ENCODE measurements at regions of chr1 and their contacts with region 1.

Region 1: DNA sequence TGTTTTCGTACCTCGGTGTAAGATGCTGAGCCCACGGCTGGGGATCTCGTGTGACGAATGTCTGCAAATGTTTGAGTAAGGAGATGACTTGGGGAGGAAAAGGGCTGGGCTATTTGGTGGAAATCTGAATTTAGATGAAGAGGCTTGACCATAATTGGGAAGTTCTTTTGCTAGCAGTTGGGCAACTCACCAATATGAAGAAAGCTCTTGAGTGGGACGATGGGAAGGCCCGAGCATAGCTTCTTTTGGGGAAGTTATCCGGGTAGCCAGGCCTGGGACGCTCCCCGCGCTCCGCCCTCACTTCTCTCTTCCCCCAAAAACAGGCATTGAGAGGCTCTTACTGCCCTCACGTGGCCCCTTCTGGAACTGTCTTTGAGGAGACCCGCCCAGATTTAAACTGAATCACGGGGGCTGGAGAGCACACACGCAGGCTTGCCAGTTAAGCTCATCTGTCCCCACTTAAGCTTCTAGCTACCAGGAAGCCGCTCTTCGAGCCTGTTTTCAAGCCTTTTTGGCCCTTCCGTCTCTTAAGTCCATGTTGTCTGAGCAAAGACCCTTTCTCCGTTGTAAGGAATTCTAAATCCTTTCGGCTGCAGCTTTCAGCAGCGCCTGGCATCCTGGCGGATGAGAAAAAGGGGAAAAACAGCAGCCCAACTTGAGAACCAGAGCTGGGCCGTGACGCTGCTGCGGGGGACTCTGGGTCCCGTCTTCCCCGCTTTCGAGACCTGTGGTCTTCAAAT is 93.1 kb downstream of the NID1 start:
- DNase-seq: peak; percentile 71 to 87 (median 84)
- ATAC-seq: peak; percentile 98
- H3K4me3 ChIP-seq: peak overlapping the region; percentile 14
- H3K4me3 Mint-ChIP-seq: peak overlapping the region; percentile 67 to 82 (median 76)
- H3K27ac ChIP-seq: peak overlapping the region; percentile 59
- H3K27ac Mint-ChIP-seq: peak overlapping the region; percentile 87 to 95 (median 90)
- H3K4me1 ChIP-seq: peaks cover 9 to 14% of the 10 kb centered on the region in 2 donors
- H3K4me1 Mint-ChIP-seq: peaks cover 9 to 19% (median 13%) of the 10 kb centered on the region in 7 donors
- H3K27me3 ChIP-seq: no peaks in the 10 kb centered on the region
- H3K27me3 Mint-ChIP-seq: peaks cover 0 to 26% (median 0%) of the 10 kb centered on the region in 5 donors

Region 2: GRCh38 chr1:235513495-235514366 is 458.0 kb before region 1 on chr1:
- CTCF ChIA-PET with region 1: interaction called, 6 read pairs
- POLR2A ChIA-PET with region 1: no interaction called
- intact Hi-C with region 1: loop called (anchors 1 kb)
- DNase-seq: peak in 7 of 9 donors; percentile 32 to 68 (median 53)
- ATAC-seq: peak; percentile 75
- H3K4me3 ChIP-seq: no peak overlapping the region
- H3K4me3 Mint-ChIP-seq: no peak overlapping the region
- H3K27ac ChIP-seq: no peak overlapping the region
- H3K27ac Mint-ChIP-seq: peak overlapping the region in 1 of 9 donors; percentile 41
- H3K4me1 ChIP-seq: no peaks in the 10 kb centered on the region
- H3K4me1 Mint-ChIP-seq: peaks cover 0 to 10% (median 0%) of the 10 kb centered on the region in 7 donors
- H3K27me3 ChIP-seq: no peaks in the 10 kb centered on the region
- H3K27me3 Mint-ChIP-seq: peaks cover 0 to 27% (median 3%) of the 10 kb centered on the region in 5 donors

Region 3: GRCh38 chr1:235758931-235759330 is 212.8 kb before region 1 on chr1:
- CTCF ChIA-PET with region 1: interaction called, 6 read pairs
- POLR2A ChIA-PET with region 1: no interaction called
- intact Hi-C with region 1: loop called in 1 of 2 experiments (anchors 10 kb)
- DNase-seq: no peak
- ATAC-seq: no peak
- H3K4me3 ChIP-seq: no peak overlapping the region
- H3K4me3 Mint-ChIP-seq: no peak overlapping the region
- H3K27ac ChIP-seq: no peak overlapping the region
- H3K27ac Mint-ChIP-seq: no peak overlapping the region
- H3K4me1 ChIP-seq: no peaks in the 10 kb centered on the region
- H3K4me1 Mint-ChIP-seq: no peaks in the 10 kb centered on the region
- H3K27me3 ChIP-seq: no peaks in the 10 kb centered on the region
- H3K27me3 Mint-ChIP-seq: no peaks in the 10 kb centered on the region

Region 4: DNA sequence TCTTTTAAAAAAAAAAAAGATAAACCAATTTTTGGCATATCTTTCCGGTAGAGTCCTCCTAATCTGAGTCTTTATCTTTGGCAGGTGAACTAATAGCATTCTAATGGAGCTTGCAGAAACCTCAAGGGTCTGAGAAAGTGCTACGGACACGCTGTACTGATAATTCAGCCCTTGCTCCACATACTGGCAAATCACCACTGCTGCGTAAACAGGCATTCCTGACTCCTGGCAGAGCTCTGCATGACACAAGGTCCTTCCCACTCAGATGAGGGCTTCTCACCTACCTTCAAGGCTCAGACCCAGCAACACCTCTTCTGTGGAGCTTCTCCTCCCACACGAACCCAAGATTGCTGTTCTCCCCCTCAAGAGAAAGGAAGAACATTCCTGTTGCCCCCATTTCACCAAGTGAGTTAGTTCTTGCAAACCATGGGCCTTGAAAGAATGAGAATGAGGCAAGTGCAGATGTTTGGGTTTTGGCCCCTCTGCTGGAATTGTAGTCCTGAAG is 153.1 kb before region 1 on chr1:
- CTCF ChIA-PET with region 1: interaction called, 6 read pairs
- POLR2A ChIA-PET with region 1: no interaction called
- intact Hi-C with region 1: loop called in 1 of 2 experiments (anchors 5 kb)
- DNase-seq: no peak
- ATAC-seq: no peak
- H3K4me3 ChIP-seq: no peak overlapping the region
- H3K4me3 Mint-ChIP-seq: no peak overlapping the region
- H3K27ac ChIP-seq: no peak overlapping the region
- H3K27ac Mint-ChIP-seq: no peak overlapping the region
- H3K4me1 ChIP-seq: no peaks in the 10 kb centered on the region
- H3K4me1 Mint-ChIP-seq: peaks cover 0 to 4% (median 0%) of the 10 kb centered on the region in 7 donors
- H3K27me3 ChIP-seq: no peaks in the 10 kb centered on the region
- H3K27me3 Mint-ChIP-seq: no peaks in the 10 kb centered on the region

Region 5: DNA sequence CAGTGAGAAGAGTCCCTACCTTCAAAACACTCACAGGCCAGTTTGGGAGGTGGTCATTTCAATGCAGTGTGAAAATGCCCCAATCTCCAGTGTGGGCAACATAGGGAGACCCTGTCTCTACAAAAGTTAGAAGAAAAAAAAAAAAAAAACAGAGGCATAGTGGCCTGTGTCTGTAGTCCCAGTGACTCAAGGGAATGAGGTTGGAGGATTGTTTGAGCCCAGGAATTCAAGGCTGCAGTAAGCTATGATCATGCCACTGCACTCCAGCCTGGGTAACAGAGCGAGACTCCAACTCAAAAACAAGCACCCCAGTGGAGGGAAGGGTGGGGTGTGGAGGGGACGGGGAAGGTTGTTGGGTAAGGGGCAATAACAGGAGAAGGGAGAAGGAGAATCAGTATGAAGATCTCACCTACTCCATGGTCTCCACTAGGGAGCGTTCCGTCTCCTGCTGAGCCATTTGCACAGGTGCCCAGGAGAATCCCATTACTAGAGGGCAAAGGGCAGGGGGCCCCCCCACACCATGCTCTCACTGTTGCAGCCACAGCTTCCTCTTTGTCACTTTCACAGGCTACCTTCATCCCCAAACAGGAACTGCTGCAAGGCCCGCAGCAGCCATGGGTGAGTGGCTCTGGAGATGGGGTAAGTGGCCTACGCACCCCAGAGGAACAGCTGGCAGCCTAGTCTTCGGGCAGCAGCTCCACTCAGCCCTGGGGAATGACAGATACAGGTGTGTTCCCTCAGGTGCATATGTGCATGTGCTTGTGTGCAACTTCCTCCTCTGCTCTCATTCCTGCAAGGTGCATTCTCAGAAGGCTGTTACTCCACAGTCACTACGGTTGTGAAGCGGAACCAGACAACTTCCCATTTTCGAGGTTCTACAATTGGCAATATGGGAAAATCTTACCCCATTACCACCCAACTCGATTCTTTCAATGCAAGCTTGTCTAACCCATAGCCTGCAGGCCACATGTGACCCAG is 17.1 kb before region 1 on chr1:
- CTCF ChIA-PET with region 1: interaction called, 32 read pairs
- POLR2A ChIA-PET with region 1: interaction called, 4 read pairs
- intact Hi-C with region 1: loop called (anchors 1 kb)
- DNase-seq: peak in 8 of 9 donors; percentile 25 to 44 (median 36)
- ATAC-seq: peak; percentile 91
- H3K4me3 ChIP-seq: peak overlapping the region; percentile 41
- H3K4me3 Mint-ChIP-seq: peak overlapping the region; percentile 22 to 79 (median 56)
- H3K27ac ChIP-seq: peak overlapping the region; percentile 9
- H3K27ac Mint-ChIP-seq: peak overlapping the region in 8 of 9 donors; percentile 30 to 89 (median 70)
- H3K4me1 ChIP-seq: peaks cover 30 to 32% of the 10 kb centered on the region in 2 donors
- H3K4me1 Mint-ChIP-seq: peaks cover 35 to 40% (median 39%) of the 10 kb centered on the region in 7 donors
- H3K27me3 ChIP-seq: no peaks in the 10 kb centered on the region
- H3K27me3 Mint-ChIP-seq: peaks cover 0 to 2% (median 0%) of the 10 kb centered on the region in 5 donors

Measured in naive thymus-derived CD4-positive, alpha-beta T cell (primary cell).